IMR-90 (cell line): ENCODE measurements at regions of chrX and their contacts with region 1.

Region 1: GRCh38 chrX:70087857-70088630 is 25.8 kb downstream of the OTUD6A start:
- DNase-seq: peak; percentile 40
- ATAC-seq: peak; percentile 65
- H3K4me3 ChIP-seq: no peak overlapping the region
- H3K27ac ChIP-seq: peak overlapping the region; percentile 95; the same call in 1 of the 2 replicates
- H3K4me1 ChIP-seq: peaks cover 7% of the 10 kb centered on the region
- H3K27me3 ChIP-seq: peaks cover 2% of the 10 kb centered on the region
- CTCF ChIP-seq: no peak
- POLR2A ChIP-seq: no peak
- RAD21 ChIP-seq: no peak

Region 2: DNA sequence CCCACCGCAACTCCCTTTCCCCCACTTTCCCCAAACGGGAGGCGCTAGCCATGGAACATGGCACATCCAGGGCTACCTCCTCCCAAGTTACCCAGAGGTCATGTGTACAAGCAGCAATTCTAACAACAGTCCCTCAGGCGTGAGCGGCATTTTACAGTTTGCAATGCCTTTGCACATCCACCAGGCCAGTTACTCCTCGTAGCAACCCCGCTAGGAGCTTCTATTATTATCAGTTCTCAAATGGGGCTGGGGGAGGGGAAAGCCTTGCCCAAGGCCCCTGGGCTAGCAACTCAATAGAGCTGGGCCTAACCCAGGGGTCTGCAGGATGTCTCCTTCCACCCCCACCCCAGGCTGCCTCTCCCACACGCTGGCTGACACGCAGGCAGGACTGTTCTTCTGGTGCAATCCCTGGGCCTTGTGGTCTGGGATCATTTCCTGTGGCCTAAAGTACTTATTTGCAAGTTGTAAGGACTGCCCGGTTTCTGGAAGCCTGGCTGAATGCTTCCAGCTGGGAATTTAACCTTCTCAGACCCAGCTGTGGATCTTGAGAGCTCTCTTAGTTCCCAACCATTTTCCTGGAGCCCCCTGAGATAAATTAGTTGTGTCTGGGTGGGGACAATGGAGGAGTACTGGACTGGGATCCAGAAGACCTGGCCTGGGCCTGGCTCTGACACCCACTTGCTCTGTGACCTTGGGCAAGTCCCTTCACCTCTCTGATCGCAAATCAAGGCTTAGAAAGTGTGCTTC is 950.5 kb before region 1 on chrX:
- CTCF ChIA-PET with region 1: no interaction called
- POLR2A ChIA-PET with region 1: no interaction called
- dilution Hi-C with region 1: no loop called
- in situ Hi-C with region 1: no loop called
- intact Hi-C with region 1: no loop called
- DNase-seq: peak; percentile 75
- ATAC-seq: peak; percentile 22; the same call in 1 of the 2 replicates
- H3K4me3 ChIP-seq: no peak overlapping the region
- H3K27ac ChIP-seq: peak overlapping the region; percentile 59; the same call in 1 of the 2 replicates
- H3K4me1 ChIP-seq: peaks cover 16% of the 10 kb centered on the region
- H3K27me3 ChIP-seq: peaks cover 10% of the 10 kb centered on the region; the same call in 1 of the 2 replicates
- CTCF ChIP-seq: no peak
- POLR2A ChIP-seq: no peak
- RAD21 ChIP-seq: no peak

Region 3: GRCh38 chrX:70039756-70040155 is 48.3 kb before region 1 on chrX:
- CTCF ChIA-PET with region 1: no interaction called
- POLR2A ChIA-PET with region 1: no interaction called
- dilution Hi-C with region 1: no loop called
- in situ Hi-C with region 1: no loop called
- intact Hi-C with region 1: loop called (anchors 2 kb)
- DNase-seq: no peak
- ATAC-seq: no peak
- H3K4me3 ChIP-seq: no peak overlapping the region
- H3K27ac ChIP-seq: no peak overlapping the region
- H3K4me1 ChIP-seq: peaks cover 2% of the 10 kb centered on the region; the same call in 1 of the 2 replicates
- H3K27me3 ChIP-seq: peaks cover 10% of the 10 kb centered on the region; the same call in 1 of the 2 replicates
- CTCF ChIP-seq: no peak
- POLR2A ChIP-seq: no peak
- RAD21 ChIP-seq: no peak